Mammary epithelial cell (primary cell): ENCODE measurements at regions of chr2 and their contacts with region 1.

Region 1: GRCh38 chr2:175805442-175806124 is 196.5 kb downstream of the LNPK start:
- DNase-seq: no peak
- H3K4me3 ChIP-seq: no peak overlapping the region
- H3K27ac ChIP-seq: no peak overlapping the region
- H3K4me1 ChIP-seq: no peaks in the 10 kb centered on the region
- H3K27me3 ChIP-seq: peaks cover 4% of the 10 kb centered on the region
- CTCF ChIP-seq: no peak

Region 2: GRCh38 chr2:175737722-175738361 is 67.7 kb before region 1 on chr2:
- CTCF ChIA-PET with region 1: no interaction called
- dilution Hi-C with region 1: no loop called
- in situ Hi-C with region 1: no loop called
- intact Hi-C with region 1: no loop called
- DNase-seq: no peak
- H3K4me3 ChIP-seq: no peak overlapping the region
- H3K27ac ChIP-seq: no peak overlapping the region
- H3K4me1 ChIP-seq: peaks cover 4% of the 10 kb centered on the region
- H3K27me3 ChIP-seq: no peaks in the 10 kb centered on the region
- CTCF ChIP-seq: no peak

Region 3: DNA sequence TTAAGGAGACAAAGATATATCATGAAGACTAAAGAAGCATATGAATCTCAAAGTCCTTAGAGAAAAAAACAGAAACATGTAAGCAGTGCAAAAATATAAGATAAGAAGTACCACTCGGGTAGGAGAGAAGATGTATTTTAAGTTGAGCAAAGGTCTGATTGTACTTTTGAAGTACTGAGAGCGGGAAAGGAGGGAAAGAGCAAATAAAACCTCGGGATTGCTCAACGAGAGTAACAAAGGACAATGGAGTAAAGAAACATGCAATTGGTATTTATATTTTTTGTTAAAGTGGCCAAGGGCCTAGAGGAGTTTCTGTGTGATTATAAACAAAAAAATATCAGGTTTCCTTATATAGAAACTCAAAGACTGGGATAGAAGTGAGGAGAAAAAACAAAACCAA is 55.4 kb before region 1 on chr2:
- CTCF ChIA-PET with region 1: no interaction called
- dilution Hi-C with region 1: loop called (anchors 5 kb)
- in situ Hi-C with region 1: no loop called
- intact Hi-C with region 1: no loop called
- DNase-seq: no peak
- H3K4me3 ChIP-seq: no peak overlapping the region
- H3K27ac ChIP-seq: no peak overlapping the region
- H3K4me1 ChIP-seq: no peaks in the 10 kb centered on the region
- H3K27me3 ChIP-seq: peaks cover 2% of the 10 kb centered on the region
- CTCF ChIP-seq: no peak

Region 4: DNA sequence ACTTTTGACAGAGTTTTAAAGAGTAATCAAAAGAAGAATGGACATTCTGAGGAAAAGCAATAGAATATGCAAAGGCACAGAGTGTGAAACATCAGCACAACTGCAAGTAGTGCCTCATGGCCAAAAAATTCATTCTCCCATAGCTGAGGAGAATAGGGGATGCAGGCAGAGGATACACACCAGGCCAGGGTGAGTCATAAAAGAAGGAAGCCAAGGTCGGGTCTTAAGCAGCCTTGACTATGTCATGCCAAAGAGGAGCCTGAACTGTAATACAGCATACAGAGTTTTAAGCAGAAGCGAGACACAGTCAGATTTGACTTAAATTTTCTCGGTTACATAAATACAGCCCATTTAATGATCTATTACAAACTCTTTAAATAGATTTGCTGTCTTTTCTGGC is 31.5 kb after region 1 on chr2:
- CTCF ChIA-PET with region 1: interaction called, 10 read pairs
- dilution Hi-C with region 1: no loop called
- in situ Hi-C with region 1: no loop called
- intact Hi-C with region 1: no loop called
- DNase-seq: peak; percentile 23
- H3K4me3 ChIP-seq: no peak overlapping the region
- H3K27ac ChIP-seq: no peak overlapping the region
- H3K4me1 ChIP-seq: no peaks in the 10 kb centered on the region
- H3K27me3 ChIP-seq: no peaks in the 10 kb centered on the region
- CTCF ChIP-seq: no peak